ENCODE measurements at regions of chr10 and their contacts with region 1.

Region 1: DNA sequence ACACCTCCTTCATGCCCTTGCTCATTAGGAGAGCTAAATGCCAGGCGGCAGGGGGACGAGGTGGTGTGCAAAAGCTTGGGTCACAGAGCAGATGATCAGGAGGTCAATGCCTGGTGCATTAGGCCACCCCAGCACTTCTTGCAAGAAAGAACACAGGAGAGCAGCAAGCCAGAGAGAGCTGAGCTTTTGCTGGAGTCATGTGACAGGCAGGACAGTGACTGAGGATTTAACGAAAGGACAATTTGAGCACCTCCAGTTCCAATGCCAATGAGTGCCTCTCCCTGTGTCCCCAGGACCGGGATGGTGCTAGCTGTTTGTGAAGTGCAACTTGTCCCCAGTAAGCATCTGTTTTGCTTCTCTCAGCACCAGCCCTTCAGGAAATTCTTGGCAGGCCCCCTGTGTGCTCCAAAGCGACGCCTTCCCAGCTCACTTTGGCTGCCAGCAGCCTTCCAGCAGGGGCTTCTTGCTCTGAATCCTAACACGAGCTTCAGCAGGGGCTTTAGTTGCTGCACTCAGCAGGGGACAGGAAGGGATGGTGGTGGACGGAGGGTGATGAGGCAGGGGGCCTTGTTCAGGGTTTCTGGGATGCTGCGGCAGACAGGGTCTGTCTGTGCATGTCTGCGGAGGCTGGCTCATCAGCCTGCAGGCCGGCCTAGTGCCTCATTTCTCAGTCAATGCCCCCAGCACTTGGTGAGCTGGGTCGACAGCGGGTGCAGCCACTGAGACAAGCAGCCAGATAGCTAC is 368.1 kb downstream of the RPS24 start:
- DNase-seq: peak in 4 of 10 donors; percentile 28 to 51 (median 44)
- H3K4me3 ChIP-seq: no peak overlapping the region
- H3K27ac ChIP-seq: peak overlapping the region in 16 of 59 donors; percentile 1 to 66 (median 34)
- H3K27me3 ChIP-seq: peaks cover 0 to 6% (median 0%) of the 10 kb centered on the region in 45 donors
- CTCF ChIP-seq: no peak

Region 2: GRCh38 chr10:78335691-78336401 is 66.0 kb before region 1 on chr10:
- intact Hi-C with region 1: loop called in 1 of 2 experiments (anchors 5 kb)
- DNase-seq: peak in 4 of 10 donors; percentile 24 to 51 (median 38)
- H3K4me3 ChIP-seq: no peak overlapping the region
- H3K27ac ChIP-seq: peak overlapping the region in 5 of 59 donors; percentile 19 to 63 (median 35)
- H3K27me3 ChIP-seq: no peaks in the 10 kb centered on the region
- CTCF ChIP-seq: no peak

Region 3: GRCh38 chr10:78458983-78459638 is 57.3 kb after region 1 on chr10:
- intact Hi-C with region 1: no loop called
- DNase-seq: no peak
- H3K4me3 ChIP-seq: no peak overlapping the region
- H3K27ac ChIP-seq: no peak overlapping the region
- H3K27me3 ChIP-seq: no peaks in the 10 kb centered on the region
- CTCF ChIP-seq: no peak

Measured in dorsolateral prefrontal cortex (tissue), 120 donors.